AG04450 (cell line): ENCODE measurements at regions of chr7 and their contacts with region 1.

Region 1: DNA sequence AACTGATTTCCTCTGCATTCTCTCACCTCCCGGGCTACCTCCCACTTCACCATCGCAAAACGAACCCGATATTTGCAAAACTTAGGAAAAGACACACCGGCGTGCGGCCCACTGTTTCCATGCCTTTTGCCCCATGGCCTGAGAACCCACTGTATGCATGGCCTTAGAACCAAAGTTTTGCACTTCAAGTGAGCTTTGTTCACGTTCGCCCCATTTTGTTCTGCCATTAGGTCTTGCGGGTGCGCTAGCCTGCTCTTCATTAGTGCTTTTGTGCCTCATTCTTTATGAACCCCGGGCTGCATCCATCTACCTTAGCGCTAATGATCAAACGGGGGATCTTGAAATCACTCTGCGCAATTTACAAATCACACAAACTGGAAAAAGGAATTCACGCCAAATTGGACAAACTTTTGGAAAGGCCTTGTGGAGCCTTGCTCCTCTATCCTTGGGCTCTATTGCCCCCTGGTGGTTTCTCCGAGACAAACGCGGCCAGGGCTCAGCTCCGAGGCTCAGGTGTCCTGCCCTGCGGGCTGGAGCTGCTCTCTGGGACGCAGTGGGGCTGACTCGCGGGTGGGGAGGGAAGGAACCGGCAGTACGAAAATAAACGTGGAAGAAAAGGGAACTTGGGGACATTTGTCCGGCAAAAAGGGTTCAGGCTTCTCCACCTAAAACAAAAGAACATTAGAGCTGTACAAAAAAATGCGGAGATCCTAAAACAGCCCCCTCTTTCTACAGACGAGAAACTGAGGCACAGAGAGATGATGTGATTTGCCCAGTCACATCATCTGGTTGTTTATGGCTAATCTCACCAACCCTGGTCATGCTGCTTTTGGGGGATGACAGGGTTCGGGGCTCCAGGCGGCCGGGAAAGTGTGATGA is 300.4 kb upstream of the NFE2L3 start:
- DNase-seq: peak; percentile 57
- H3K4me3 ChIP-seq: no peak overlapping the region
- H3K27ac ChIP-seq: no peak overlapping the region
- H3K27me3 ChIP-seq: no peaks in the 10 kb centered on the region
- CTCF ChIP-seq: peak; percentile 92

Region 2: GRCh38 chr7:24475166-24475961 is 1376.2 kb before region 1 on chr7:
- CTCF ChIA-PET with region 1: no interaction called
- POLR2A ChIA-PET with region 1: no interaction called
- DNase-seq: no peak
- H3K4me3 ChIP-seq: no peak overlapping the region
- H3K27ac ChIP-seq: no peak overlapping the region
- H3K27me3 ChIP-seq: no peaks in the 10 kb centered on the region
- CTCF ChIP-seq: no peak

Region 3: GRCh38 chr7:25389489-25390106 is 462.0 kb before region 1 on chr7:
- CTCF ChIA-PET with region 1: interaction called, 153 read pairs
- POLR2A ChIA-PET with region 1: interaction called, 3 read pairs
- DNase-seq: no peak
- H3K4me3 ChIP-seq: no peak overlapping the region
- H3K27ac ChIP-seq: no peak overlapping the region
- H3K27me3 ChIP-seq: peaks cover 12% of the 10 kb centered on the region
- CTCF ChIP-seq: peak; percentile 60

Region 4: DNA sequence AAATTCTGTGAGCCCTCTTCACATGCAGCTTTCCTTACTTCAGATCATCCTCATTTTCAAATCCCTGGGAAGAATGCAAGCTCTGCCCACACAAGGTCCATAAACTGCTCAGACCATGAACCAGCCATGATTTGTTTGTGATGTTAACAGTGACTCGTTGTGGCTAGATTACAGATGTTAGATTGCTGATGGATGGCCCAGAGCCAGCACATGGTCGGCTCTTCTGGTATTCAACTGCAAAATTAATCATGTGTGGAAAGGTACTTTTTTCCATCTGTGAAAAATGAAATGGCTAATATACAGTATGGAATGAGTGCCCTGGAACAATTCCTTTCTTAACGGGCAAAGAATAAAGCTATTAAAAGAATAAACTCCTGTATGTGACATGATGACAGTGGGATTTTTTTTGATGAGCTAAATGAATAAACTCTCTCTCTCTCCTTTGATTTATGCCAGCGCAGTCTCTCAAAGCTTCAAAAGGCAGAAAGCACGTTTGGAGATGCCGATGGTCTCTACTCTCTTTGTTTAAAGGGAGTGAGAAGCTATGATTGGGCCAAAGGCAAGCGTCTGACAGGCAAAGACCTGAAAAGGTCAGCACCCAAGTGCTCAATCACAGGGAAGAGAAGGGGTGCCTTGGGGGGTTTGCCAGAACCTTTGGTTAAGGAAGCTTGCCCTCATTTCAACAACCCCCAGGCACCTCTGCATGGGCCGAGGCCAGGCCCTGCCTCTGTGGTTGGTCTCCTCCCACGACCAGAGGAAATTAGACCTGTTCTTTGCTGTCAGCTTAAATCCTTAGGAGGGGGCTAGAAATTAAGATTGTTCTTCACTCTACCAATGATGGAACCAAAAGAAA is 143.6 kb before region 1 on chr7:
- CTCF ChIA-PET with region 1: interaction called, 15 read pairs
- POLR2A ChIA-PET with region 1: interaction called, 3 read pairs
- DNase-seq: no peak
- H3K4me3 ChIP-seq: no peak overlapping the region
- H3K27ac ChIP-seq: no peak overlapping the region
- H3K27me3 ChIP-seq: no peaks in the 10 kb centered on the region
- CTCF ChIP-seq: no peak

Region 5: DNA sequence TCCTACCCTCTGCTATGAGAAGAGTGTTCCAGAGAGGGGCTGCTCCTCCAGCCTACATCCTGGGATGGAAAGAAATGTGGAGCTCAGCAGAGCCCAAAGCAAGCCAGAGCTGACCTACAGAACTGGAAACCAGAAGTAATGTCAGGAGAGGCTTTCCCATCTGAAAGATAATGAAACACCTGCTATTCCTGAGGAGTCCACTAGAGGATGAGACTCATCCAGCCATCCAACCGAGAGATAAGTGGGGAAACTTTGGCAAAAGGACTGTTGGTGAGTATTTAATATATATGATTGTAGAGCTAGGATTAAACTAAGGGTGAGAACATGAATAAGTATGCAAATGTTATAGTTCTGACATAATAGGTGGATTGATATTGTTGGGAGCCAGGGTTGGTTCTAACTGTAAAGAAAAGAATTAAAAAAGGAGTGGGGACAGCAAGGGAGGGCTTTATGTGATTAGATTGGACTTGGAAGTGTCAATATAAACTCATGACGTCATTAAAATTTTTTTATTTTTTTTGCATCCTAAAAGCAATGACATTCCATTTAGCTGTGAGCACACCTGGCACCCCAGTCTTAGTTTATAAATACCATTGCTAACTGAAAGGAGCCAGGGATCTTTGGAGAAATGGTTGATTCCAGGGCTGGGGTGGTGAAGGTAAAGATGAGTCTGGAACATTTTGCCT is 12.3 kb before region 1 on chr7:
- CTCF ChIA-PET with region 1: interaction called, 15 read pairs
- POLR2A ChIA-PET with region 1: interaction called, 7 read pairs
- DNase-seq: no peak
- H3K4me3 ChIP-seq: no peak overlapping the region
- H3K27ac ChIP-seq: no peak overlapping the region
- H3K27me3 ChIP-seq: no peaks in the 10 kb centered on the region
- CTCF ChIP-seq: peak; percentile 48

Region 6: DNA sequence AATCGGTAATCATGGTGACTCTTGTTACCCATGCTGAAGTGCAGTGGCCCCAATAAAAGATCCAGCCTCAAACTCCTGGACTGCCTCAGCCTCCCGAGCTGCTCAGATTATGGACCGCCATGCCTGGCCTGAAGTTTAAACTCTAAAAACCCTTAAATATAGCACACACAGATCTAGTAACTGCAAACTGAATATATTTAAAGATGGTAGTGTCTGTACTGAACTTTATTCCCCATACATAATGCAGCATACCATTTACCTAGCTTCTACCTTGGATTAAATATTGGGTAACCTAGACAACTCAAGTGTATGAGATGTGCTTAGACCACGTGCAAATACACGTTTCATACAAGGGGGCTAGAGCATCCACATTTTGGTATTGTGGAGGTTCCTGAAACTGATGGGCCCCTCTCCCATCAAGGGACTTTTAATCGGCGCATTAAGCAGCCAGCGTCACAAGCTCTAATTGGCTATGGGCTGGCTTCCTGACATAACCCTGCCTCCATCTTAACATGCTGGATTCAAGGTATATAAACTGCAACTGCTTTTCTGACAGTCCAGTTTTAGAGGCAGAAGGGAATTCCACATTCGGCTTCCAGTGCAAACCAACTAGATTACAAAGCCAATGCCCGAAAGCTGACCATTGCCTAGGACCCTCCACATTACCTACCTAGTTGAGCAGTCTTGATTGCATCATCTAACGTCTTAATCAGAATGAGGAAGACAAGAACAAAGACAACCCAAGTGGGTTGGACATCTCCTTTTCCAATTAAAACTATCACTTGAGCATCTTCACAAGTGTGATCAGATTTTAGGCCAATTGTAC is 336.0 kb after region 1 on chr7:
- CTCF ChIA-PET with region 1: no interaction called
- POLR2A ChIA-PET with region 1: no interaction called
- DNase-seq: no peak
- H3K4me3 ChIP-seq: no peak overlapping the region
- H3K27ac ChIP-seq: no peak overlapping the region
- H3K27me3 ChIP-seq: no peaks in the 10 kb centered on the region
- CTCF ChIP-seq: no peak